Posterior cingulate gyrus (tissue), 11 donors: ENCODE measurements at regions of chr19 and their contacts with region 1.

Region 1: GRCh38 chr19:7535035-7535992 is at the start of gene PNPLA6:
- DNase-seq: peak; percentile 96 to 100 (median 97)

Region 2: GRCh38 chr19:7488736-7489353 is 46.5 kb before region 1 on chr19 and contains the start of gene PEX11G:
- intact Hi-C with region 1: loop called (anchors 2 kb)
- DNase-seq: peak; percentile 81 to 99 (median 91)

Region 3: GRCh38 chr19:7522072-7522922 is 13.0 kb before region 1 on chr19 and contains the start of gene MCOLN1:
- intact Hi-C with region 1: loop called (anchors 1 kb)
- DNase-seq: peak; percentile 97 to 100 (median 98)

Region 4: DNA sequence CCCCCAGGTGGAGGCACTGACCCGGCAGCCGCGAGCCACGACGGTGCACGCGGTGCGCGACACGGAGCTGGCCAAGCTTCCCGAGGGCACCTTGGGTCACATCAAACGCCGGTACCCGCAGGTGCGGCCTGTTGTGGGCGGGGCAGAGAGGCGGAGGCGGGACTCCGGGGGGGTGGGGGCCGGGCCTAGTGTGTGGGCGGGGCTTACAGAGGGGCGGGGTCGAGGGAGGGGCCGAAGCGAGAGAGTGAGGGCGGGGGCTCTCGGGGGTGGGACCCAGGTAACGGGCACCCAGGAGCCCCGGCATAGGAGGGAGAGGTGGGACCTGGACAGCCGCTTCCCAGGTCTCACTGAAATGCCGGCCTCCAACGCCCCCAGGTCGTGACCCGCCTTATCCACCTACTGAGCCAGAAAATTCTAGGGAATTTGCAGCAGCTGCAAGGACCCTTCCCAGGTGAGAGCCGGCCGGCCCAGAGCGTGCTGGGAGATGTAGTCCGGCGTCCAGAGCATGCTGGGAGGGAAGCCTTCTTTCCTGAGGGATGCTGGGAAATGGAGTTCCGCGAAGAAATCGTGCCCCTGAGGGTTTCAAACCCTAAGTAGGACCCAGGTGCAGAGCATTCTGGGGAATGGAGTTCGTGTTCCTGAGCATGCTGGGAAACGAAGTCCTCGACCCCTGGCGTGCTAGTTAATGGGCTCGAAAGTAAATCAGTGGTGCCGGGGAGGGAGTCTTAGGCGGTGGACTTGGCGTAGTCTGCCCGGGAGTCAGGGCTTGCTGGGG is 15.9 kb after region 1 on chr19:
- intact Hi-C with region 1: loop called (anchors 1 kb)
- DNase-seq: peak; percentile 51 to 97 (median 78)